ENCODE measurements at regions of chr20 and their contacts with region 1.

Region 1: GRCh38 chr20:5863040-5863833 is 87.1 kb downstream of the TRMT6 start:
- DNase-seq: no peak
- H3K4me3 ChIP-seq: no peak overlapping the region
- H3K27ac ChIP-seq: no peak overlapping the region
- H3K4me1 ChIP-seq: no peaks in the 10 kb centered on the region
- H3K27me3 ChIP-seq: no peaks in the 10 kb centered on the region
- CTCF ChIP-seq: no peak

Region 2: GRCh38 chr20:5822569-5822968 is 40.7 kb before region 1 on chr20:
- CTCF ChIA-PET with region 1: no interaction called
- POLR2A ChIA-PET with region 1: no interaction called
- intact Hi-C with region 1: no loop called
- DNase-seq: no peak
- H3K4me3 ChIP-seq: no peak overlapping the region
- H3K27ac ChIP-seq: no peak overlapping the region
- H3K4me1 ChIP-seq: peaks cover 4% of the 10 kb centered on the region; the same call in 1 of the 2 replicates
- H3K27me3 ChIP-seq: no peaks in the 10 kb centered on the region
- CTCF ChIP-seq: no peak

Region 3: GRCh38 chr20:6439737-6440442 is 576.7 kb after region 1 on chr20:
- CTCF ChIA-PET with region 1: no interaction called
- POLR2A ChIA-PET with region 1: no interaction called
- intact Hi-C with region 1: no loop called
- DNase-seq: no peak
- H3K4me3 ChIP-seq: no peak overlapping the region
- H3K27ac ChIP-seq: no peak overlapping the region
- H3K4me1 ChIP-seq: no peaks in the 10 kb centered on the region
- H3K27me3 ChIP-seq: no peaks in the 10 kb centered on the region
- CTCF ChIP-seq: no peak

Region 4: DNA sequence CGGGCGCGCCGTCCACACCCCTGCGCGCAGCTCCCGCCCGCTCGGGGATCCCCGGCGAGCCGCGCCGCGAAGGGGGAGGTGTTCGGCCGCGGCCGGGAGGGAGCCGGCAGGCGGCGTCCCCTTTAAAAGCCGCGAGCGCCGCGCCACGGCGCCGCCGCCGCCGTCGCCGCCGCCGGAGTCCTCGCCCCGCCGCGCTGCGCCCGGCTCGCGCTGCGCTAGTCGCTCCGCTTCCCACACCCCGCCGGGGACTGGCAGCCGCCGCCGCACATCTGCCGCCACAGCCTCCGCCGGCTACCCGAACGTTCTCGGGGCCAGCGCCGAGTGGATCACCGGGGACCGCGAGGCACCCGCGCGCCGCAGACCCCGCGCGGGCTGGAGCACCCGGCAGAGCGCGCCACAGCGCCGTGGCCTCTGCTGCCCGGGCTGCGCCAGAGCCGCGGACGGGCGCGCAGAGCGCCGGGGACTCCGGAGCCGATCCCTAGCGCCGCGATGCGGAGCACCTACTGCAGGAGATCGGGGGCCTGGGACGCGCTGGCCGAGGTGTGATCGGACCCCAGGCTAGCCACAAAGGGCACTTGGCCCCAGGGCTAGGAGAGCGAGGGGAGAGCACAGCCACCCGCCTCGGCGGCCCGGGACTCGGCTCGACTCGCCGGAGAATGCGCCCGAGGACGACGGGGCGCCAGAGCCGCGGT is 904.4 kb after region 1 on chr20 and contains the start of gene BMP2:
- CTCF ChIA-PET with region 1: no interaction called
- POLR2A ChIA-PET with region 1: no interaction called
- intact Hi-C with region 1: no loop called
- DNase-seq: no peak
- H3K4me3 ChIP-seq: no peak within 1 kb of the TSS; the same call in 1 of the 2 replicates
- H3K27ac ChIP-seq: no peak within 1 kb of the TSS
- H3K4me1 ChIP-seq: no peaks in the 10 kb centered on the region
- H3K27me3 ChIP-seq: no peaks in the 10 kb centered on the region; the same call in 1 of the 2 replicates
- CTCF ChIP-seq: no peak
- total RNA-seq, gene BMP2: not detected in 2 replicates

Region 5: DNA sequence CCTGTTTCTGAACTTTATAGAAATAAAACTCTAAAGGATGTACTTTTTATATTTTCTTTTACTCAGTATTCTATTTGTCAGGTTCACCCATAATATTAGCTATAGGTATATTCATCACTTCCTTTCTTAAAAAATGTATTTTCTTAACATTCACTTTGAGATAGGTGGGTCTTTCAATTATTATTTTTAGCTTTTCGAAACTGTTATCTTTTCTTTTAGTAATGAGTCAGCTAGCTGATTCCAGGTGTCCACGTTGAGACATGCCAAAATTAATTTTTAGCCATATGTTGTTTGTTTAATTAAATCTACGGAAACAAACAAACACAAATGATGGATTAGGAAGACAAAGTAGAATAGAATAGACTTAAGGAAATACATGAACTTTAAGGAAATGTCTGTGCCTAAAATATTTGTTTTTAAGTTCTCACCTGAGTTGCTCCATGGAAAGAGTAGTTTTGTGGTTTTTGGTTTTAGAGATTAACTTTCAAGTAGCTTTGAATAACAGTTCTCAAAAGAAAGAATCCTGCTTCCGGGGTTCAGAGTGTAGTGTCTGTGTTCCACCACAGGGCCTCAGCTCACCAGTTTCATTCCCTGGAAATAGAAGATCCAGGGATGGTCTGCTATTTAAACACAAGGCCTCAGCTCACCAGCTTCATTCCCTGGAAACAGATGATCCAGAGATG is 1642.1 kb after region 1 on chr20:
- CTCF ChIA-PET with region 1: no interaction called
- POLR2A ChIA-PET with region 1: no interaction called
- intact Hi-C with region 1: loop called (anchors 10 kb)
- DNase-seq: no peak
- H3K4me3 ChIP-seq: no peak overlapping the region
- H3K27ac ChIP-seq: no peak overlapping the region
- H3K4me1 ChIP-seq: no peaks in the 10 kb centered on the region
- H3K27me3 ChIP-seq: no peaks in the 10 kb centered on the region
- CTCF ChIP-seq: no peak